Right ventricle myocardium inferior (tissue), 1 donor: ENCODE measurements at regions of chr5 and their contacts with region 1.

Region 1: GRCh38 chr5:38307845-38308244 is 49.5 kb downstream of the EGFLAM start:
- DNase-seq: no peak
- ATAC-seq: no peak

Region 2: DNA sequence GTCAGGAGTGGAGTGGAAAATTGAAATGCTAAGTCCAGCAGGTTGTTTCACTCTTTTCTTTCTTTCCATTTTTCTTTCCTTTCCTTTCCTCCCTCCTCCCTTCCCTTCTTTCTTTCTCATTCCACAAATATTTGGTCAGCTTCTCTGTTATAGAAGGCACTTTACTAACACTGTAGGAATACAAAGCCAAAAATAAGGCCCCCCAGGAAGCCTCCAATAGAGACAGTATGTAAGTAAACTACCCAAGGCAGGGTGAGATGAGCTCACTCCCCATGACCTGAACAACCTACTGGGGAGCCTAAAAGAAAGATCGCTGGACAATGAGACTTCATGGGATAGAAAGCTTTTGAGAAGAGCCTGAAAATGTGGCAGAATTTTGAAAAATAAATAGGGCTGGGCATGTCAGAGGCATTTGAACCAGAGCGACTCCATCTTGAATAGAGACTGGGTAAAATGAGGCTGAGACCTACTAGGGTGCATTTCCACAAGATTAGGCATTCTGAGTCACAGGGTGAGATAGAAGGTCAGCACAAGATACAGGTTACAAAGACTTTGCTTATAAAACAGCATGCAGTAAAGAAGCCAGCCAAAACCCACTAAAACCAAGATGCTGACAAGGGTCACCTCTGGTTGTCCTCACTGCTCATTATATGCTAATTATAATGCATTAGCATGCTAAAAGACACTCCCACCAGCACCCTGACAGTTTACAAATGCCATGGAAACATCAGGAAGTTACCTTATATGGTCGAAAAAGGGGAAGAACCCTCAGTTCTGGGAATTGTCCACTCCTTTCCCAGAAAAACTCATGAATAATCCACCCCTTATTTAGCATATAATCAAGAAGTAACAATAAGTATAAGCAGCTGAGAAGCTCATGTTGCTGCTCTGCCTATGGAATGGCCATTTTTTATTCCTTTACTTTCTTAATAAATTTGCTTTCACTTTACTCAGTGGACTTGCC is 208.4 kb before region 1 on chr5:
- intact Hi-C with region 1: no loop called
- DNase-seq: no peak
- ATAC-seq: no peak

Region 3: GRCh38 chr5:38265546-38266179 is 42.2 kb before region 1 on chr5:
- intact Hi-C with region 1: loop called (anchors 5 kb)
- DNase-seq: no peak
- ATAC-seq: peak; percentile 75

Region 4: GRCh38 chr5:38347040-38347763 is 39.4 kb after region 1 on chr5:
- intact Hi-C with region 1: no loop called
- DNase-seq: no peak
- ATAC-seq: no peak